Mammary epithelial cell (primary cell): ENCODE measurements at regions of chr1 and their contacts with region 1.

Region 1: GRCh38 chr1:66981679-66982078 is 56.9 kb downstream of the MIER1 start:
- DNase-seq: peak; percentile 24
- H3K4me3 ChIP-seq: no peak overlapping the region
- H3K27ac ChIP-seq: no peak overlapping the region
- H3K4me1 ChIP-seq: no peaks in the 10 kb centered on the region
- H3K27me3 ChIP-seq: no peaks in the 10 kb centered on the region
- CTCF ChIP-seq: no peak

Region 2: GRCh38 chr1:66022904-66023620 is 958.6 kb before region 1 on chr1:
- CTCF ChIA-PET with region 1: no interaction called
- dilution Hi-C with region 1: no loop called
- in situ Hi-C with region 1: no loop called
- intact Hi-C with region 1: no loop called
- DNase-seq: no peak
- H3K4me3 ChIP-seq: no peak overlapping the region
- H3K27ac ChIP-seq: no peak overlapping the region
- H3K4me1 ChIP-seq: no peaks in the 10 kb centered on the region
- H3K27me3 ChIP-seq: no peaks in the 10 kb centered on the region
- CTCF ChIP-seq: no peak

Region 3: DNA sequence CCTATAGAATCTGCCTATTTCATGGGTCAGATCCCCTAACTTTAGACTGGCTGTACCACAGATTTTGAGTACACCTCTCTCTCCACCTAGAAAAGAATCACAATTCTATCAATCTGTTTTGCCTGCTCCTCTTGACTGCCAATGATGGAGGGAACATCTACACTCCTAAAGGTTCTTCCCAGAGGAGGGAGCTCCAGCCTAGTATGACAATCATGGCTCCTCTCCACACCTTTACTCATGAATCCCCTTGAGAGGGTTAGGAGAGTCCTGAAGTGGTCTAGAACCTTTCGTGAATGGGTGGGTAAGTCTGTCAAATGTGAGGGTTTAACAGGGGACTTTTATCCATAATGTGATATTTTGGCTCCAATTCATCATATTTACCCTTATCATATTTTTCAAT is 105.0 kb before region 1 on chr1:
- CTCF ChIA-PET with region 1: no interaction called
- dilution Hi-C with region 1: no loop called
- in situ Hi-C with region 1: no loop called
- intact Hi-C with region 1: loop called (anchors 10 kb)
- DNase-seq: no peak
- H3K4me3 ChIP-seq: no peak overlapping the region
- H3K27ac ChIP-seq: no peak overlapping the region
- H3K4me1 ChIP-seq: no peaks in the 10 kb centered on the region
- H3K27me3 ChIP-seq: peaks cover 3% of the 10 kb centered on the region
- CTCF ChIP-seq: peak in 1 of 2 donors; percentile 14